ENCODE measurements at regions of chrX and their contacts with region 1.

Region 1: GRCh38 chrX:107747596-107748161 is 27.9 kb downstream of the TSC22D3 start:
- DNase-seq: peak in 2 of 5 donors; percentile 36 to 55
- ATAC-seq: peak; percentile 84 to 90 (median 86)
- H3K4me3 ChIP-seq: no peak overlapping the region
- H3K27ac ChIP-seq: peak overlapping the region; percentile 21 to 87 (median 78)
- H3K4me1 ChIP-seq: peaks cover 0 to 84% (median 40%) of the 10 kb centered on the region in 12 donors
- H3K27me3 ChIP-seq: peaks cover 0 to 17% (median 0%) of the 10 kb centered on the region in 9 donors
- CTCF ChIP-seq: no peak
- POLR2A ChIP-seq: peak in 1 of 2 donors; percentile 11

Region 2: GRCh38 chrX:107857799-107858198 is 110.1 kb after region 1 on chrX:
- intact Hi-C with region 1: no loop called
- DNase-seq: no peak
- ATAC-seq: no peak
- H3K4me3 ChIP-seq: no peak overlapping the region
- H3K27ac ChIP-seq: no peak overlapping the region
- H3K4me1 ChIP-seq: no peaks in the 10 kb centered on the region
- H3K27me3 ChIP-seq: peaks cover 0 to 46% (median 0%) of the 10 kb centered on the region in 9 donors
- CTCF ChIP-seq: no peak
- POLR2A ChIP-seq: no peak

Region 3: GRCh38 chrX:107880054-107880610 is 132.5 kb after region 1 on chrX:
- intact Hi-C with region 1: no loop called
- DNase-seq: no peak
- ATAC-seq: no peak
- H3K4me3 ChIP-seq: no peak overlapping the region
- H3K27ac ChIP-seq: no peak overlapping the region
- H3K4me1 ChIP-seq: no peaks in the 10 kb centered on the region
- H3K27me3 ChIP-seq: peaks cover 0 to 6% (median 0%) of the 10 kb centered on the region in 9 donors
- CTCF ChIP-seq: no peak
- POLR2A ChIP-seq: no peak

Region 4: DNA sequence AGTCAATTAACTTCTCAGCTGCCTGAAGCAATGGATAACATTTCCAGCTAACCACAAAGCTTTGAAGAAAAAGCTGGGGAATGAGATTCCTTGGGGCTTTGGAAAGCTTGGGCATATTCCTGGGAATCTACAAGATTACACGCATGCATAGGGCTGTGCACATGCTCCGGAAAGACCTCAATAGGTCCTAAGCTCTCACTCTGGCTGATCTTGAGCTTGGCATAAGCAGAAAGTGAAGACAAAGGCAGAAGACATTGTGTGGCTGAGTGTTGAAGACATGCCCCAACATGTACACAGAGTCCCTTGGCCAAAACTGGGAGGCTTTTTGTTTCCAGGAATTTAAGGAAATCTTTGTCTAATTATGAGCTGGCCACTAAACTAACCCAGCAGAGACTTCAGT is 375.1 kb after region 1 on chrX:
- intact Hi-C with region 1: loop called in 1 of 10 experiments (anchors 10 kb)
- DNase-seq: no peak
- ATAC-seq: peak in 3 of 4 donors; percentile 8 to 28 (median 23)
- H3K4me3 ChIP-seq: no peak overlapping the region
- H3K27ac ChIP-seq: peak overlapping the region in 8 of 12 donors; percentile 25 to 63 (median 45)
- H3K4me1 ChIP-seq: peaks cover 0 to 52% (median 19%) of the 10 kb centered on the region in 12 donors
- H3K27me3 ChIP-seq: no peaks in the 10 kb centered on the region
- CTCF ChIP-seq: no peak
- POLR2A ChIP-seq: no peak

Region 5: DNA sequence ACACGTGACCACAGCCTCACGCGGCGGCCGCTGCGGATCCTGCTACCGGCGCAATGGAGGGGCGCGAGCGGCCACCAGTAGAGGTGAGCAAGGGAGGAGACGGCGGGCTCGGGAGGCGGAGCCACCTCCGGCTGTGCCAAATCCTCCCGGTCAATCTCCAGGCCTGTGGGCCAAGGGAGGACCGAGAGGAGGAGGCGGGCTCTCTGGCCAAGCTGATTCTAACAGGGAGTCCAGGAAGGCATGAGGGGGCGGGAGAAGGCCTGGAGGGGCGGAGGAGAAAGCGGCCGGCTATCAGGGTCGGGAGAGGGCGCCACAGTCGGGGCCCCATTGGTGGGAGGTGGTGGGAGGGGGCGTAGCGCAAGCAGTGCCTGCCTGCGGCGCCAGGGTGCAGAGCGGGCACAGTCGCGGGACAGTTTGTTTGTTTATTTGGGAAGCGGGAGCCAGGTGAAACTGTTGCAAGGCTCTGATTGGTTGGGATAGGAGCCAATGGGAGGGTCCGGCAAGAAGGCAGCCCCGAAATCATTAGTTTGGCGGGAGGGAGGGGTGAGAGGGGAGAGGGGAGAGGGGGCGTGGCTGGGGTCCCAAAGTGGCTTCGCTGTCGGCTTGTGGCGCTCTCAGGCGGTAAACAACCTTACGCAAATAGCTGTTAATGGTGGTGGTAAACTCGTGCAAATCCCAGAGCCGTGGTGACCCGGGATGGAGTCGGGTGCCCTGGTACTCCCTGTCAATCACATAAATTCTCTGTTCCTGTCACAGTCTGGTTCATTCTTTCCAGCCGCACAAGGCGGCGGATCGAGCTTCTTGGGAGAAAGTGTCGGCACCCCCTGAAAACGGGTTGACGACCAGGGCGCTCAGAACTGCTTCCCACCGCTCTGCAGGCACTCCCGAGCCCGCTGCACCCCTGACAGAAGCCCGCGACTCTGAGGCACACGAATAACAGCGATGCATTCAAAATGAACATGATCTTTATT is 989.1 kb after region 1 on chrX and contains the start of gene IRS4:
- intact Hi-C with region 1: no loop called
- DNase-seq: peak in 2 of 5 donors; percentile 22 to 44
- ATAC-seq: peak in 2 of 4 donors; percentile 18 to 28
- H3K4me3 ChIP-seq: peak within 1 kb of the TSS in 11 of 12 donors; percentile 1 to 44 (median 35)
- H3K27ac ChIP-seq: no peak within 1 kb of the TSS
- H3K4me1 ChIP-seq: peaks cover 0 to 13% (median 0%) of the 10 kb centered on the region in 12 donors
- H3K27me3 ChIP-seq: peaks cover 0 to 87% (median 30%) of the 10 kb centered on the region in 9 donors
- CTCF ChIP-seq: no peak
- POLR2A ChIP-seq: no peak
- total RNA-seq, gene IRS4: 0.11 TPM in 1 of 9 donors, not detected in the others